CD8-positive, alpha-beta T cell (primary cell): ENCODE measurements at regions of chr22 and their contacts with region 1.

Region 1: GRCh38 chr22:39003165-39003638 is 10.9 kb upstream of the APOBEC3C start:
- DNase-seq: peak; percentile 43 to 92 (median 76)
- ATAC-seq: peak; percentile 83
- H3K4me3 ChIP-seq: no peak overlapping the region
- H3K4me3 Mint-ChIP-seq: no peak overlapping the region
- H3K27ac ChIP-seq: no peak overlapping the region
- H3K27ac Mint-ChIP-seq: peak overlapping the region; percentile 27
- H3K4me1 ChIP-seq: peaks cover 10% of the 10 kb centered on the region
- H3K4me1 Mint-ChIP-seq: peaks cover 12% of the 10 kb centered on the region
- H3K27me3 ChIP-seq: no peaks in the 10 kb centered on the region
- H3K27me3 Mint-ChIP-seq: peaks cover under 1% of the 10 kb centered on the region
- CTCF ChIP-seq: peak; percentile 68

Region 2: GRCh38 chr22:38766076-38766777 is 237.0 kb before region 1 on chr22:
- CTCF ChIA-PET with region 1: interaction called, 28 read pairs
- POLR2A ChIA-PET with region 1: no interaction called
- intact Hi-C with region 1: loop called in 1 of 2 experiments (anchors 5 kb)
- DNase-seq: peak in 7 of 9 experiments; percentile 34 to 74 (median 55)
- ATAC-seq: peak; percentile 63
- H3K4me3 ChIP-seq: no peak overlapping the region
- H3K4me3 Mint-ChIP-seq: no peak overlapping the region
- H3K27ac ChIP-seq: no peak overlapping the region
- H3K27ac Mint-ChIP-seq: no peak overlapping the region
- H3K4me1 ChIP-seq: peaks cover 6% of the 10 kb centered on the region
- H3K4me1 Mint-ChIP-seq: peaks cover 11% of the 10 kb centered on the region
- H3K27me3 ChIP-seq: no peaks in the 10 kb centered on the region
- H3K27me3 Mint-ChIP-seq: no peaks in the 10 kb centered on the region
- CTCF ChIP-seq: peak; percentile 54

Region 3: GRCh38 chr22:38981992-38982927 is 20.9 kb before region 1 on chr22 and contains the start of gene APOBEC3B:
- CTCF ChIA-PET with region 1: interaction called, 6 read pairs
- POLR2A ChIA-PET with region 1: no interaction called
- intact Hi-C with region 1: loop called in 1 of 2 experiments (anchors 1 kb)
- DNase-seq: peak; percentile 10 to 84 (median 69)
- ATAC-seq: peak; percentile 63
- H3K4me3 ChIP-seq: peak within 1 kb of the TSS; percentile 41 to 48
- H3K4me3 Mint-ChIP-seq: peak within 1 kb of the TSS; percentile 84
- H3K27ac ChIP-seq: peak within 1 kb of the TSS in 1 of 2 experiments; percentile 19
- H3K27ac Mint-ChIP-seq: no peak within 1 kb of the TSS
- H3K4me1 ChIP-seq: peaks cover 18% of the 10 kb centered on the region
- H3K4me1 Mint-ChIP-seq: peaks cover 28% of the 10 kb centered on the region
- H3K27me3 ChIP-seq: peaks cover 0 to 7% of the 10 kb centered on the region in 2 experiments
- H3K27me3 Mint-ChIP-seq: no peaks in the 10 kb centered on the region
- CTCF ChIP-seq: no peak
- total RNA-seq, gene APOBEC3B: 0.41 TPM in 1 of 2 experiments, not detected in the other

Region 4: GRCh38 chr22:39030705-39031104 is 27.5 kb after region 1 on chr22:
- CTCF ChIA-PET with region 1: no interaction called
- POLR2A ChIA-PET with region 1: no interaction called
- intact Hi-C with region 1: no loop called
- DNase-seq: no peak
- ATAC-seq: no peak
- H3K4me3 ChIP-seq: no peak overlapping the region
- H3K4me3 Mint-ChIP-seq: no peak overlapping the region
- H3K27ac ChIP-seq: no peak overlapping the region
- H3K27ac Mint-ChIP-seq: no peak overlapping the region
- H3K4me1 ChIP-seq: peaks cover under 1% of the 10 kb centered on the region
- H3K4me1 Mint-ChIP-seq: peaks cover 4% of the 10 kb centered on the region
- H3K27me3 ChIP-seq: no peaks in the 10 kb centered on the region
- H3K27me3 Mint-ChIP-seq: no peaks in the 10 kb centered on the region
- CTCF ChIP-seq: no peak

Region 5: GRCh38 chr22:39117585-39118191 is 114.5 kb after region 1 on chr22:
- CTCF ChIA-PET with region 1: interaction called, 63 read pairs
- POLR2A ChIA-PET with region 1: no interaction called
- intact Hi-C with region 1: loop called (anchors 1 kb)
- DNase-seq: peak; percentile 49 to 93 (median 74)
- ATAC-seq: peak; percentile 51
- H3K4me3 ChIP-seq: peak overlapping the region in 1 of 2 experiments; percentile 15
- H3K4me3 Mint-ChIP-seq: peak overlapping the region; percentile 45
- H3K27ac ChIP-seq: peak overlapping the region; percentile 54 to 93
- H3K27ac Mint-ChIP-seq: peak overlapping the region; percentile 84
- H3K4me1 ChIP-seq: peaks cover 14% of the 10 kb centered on the region
- H3K4me1 Mint-ChIP-seq: peaks cover 38% of the 10 kb centered on the region
- H3K27me3 ChIP-seq: no peaks in the 10 kb centered on the region
- H3K27me3 Mint-ChIP-seq: no peaks in the 10 kb centered on the region
- CTCF ChIP-seq: peak; percentile 54

Region 6: DNA sequence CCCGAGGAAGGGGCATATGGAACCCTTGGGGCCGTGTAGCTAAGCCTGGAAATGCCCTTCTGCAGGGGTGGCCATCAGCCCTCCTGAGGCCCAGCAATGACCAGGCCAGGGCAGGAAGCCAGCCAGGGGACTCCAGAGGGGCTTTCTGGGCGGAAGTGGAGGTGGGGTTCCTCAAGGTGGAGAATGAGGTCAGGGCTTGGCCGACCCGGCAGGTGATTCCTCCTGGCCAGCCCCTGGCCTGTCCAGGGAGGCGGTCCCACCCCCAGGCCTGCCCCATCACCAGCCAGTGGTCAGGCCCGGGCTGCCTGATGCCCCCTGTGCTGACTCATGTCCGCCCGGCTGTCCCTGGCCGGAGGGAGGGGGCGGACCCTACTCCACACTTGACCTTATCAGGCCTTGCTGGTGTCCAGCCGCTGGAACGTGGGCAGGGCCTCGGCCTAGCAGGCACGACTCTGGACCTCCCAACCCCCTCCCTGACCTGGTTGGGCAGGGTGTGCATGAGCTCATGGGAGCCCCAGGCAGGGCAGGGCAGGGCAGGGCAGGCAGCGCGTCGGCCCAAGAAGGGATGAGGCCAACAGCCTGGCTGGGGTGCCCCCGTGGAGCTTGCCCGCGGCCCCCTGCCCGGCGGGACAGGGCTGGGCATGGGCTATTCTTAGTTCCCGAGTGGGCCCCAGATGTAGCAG is 280.3 kb after region 1 on chr22:
- CTCF ChIA-PET with region 1: no interaction called
- POLR2A ChIA-PET with region 1: no interaction called
- intact Hi-C with region 1: no loop called
- DNase-seq: no peak
- ATAC-seq: no peak
- H3K4me3 ChIP-seq: no peak overlapping the region
- H3K4me3 Mint-ChIP-seq: no peak overlapping the region
- H3K27ac ChIP-seq: no peak overlapping the region
- H3K27ac Mint-ChIP-seq: no peak overlapping the region
- H3K4me1 ChIP-seq: no peaks in the 10 kb centered on the region
- H3K4me1 Mint-ChIP-seq: peaks cover 6% of the 10 kb centered on the region
- H3K27me3 ChIP-seq: no peaks in the 10 kb centered on the region
- H3K27me3 Mint-ChIP-seq: peaks cover 5% of the 10 kb centered on the region
- CTCF ChIP-seq: no peak

Region 7: DNA sequence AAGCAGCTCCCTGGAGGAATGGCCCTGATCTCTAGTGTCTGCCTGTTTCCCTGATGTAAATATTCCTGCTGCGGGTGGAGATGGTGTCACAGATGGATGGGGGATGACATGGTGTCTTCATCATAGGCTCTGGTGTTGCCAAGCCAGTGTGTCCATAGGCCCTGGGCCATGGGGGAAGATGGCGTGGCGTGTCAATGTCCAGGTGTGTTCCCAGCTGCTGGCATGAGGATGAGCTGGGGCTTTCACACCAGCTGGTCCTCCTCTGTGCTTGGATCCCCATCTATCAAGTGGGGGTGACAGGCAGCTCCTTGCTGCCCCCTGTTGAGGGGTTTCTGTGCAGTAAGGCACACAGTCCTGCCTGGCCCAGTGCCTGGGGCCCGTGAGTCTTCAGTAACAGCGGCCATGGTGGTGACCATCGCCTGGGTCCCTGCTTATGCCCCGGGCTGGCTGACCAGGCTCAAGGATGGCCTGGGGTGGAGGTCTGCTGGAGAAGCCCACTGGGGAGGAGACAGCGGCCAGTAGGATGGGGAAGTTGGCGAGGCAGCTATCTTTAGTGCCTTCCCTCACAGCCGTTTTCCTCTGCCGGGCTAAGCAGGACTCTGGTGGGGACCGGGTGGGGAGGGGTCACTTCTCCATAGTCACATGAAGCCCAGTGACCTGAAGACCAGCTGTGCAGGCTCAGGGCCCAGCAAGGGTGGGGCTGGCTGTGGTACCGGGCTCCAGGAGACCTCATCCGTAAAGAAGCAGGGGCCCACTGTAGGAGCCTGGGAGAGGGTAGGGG is 303.6 kb after region 1 on chr22:
- CTCF ChIA-PET with region 1: interaction called, 4 read pairs
- POLR2A ChIA-PET with region 1: no interaction called
- intact Hi-C with region 1: loop called in 1 of 2 experiments (anchors 1 kb)
- DNase-seq: peak in 8 of 9 experiments; percentile 28 to 75 (median 60)
- ATAC-seq: peak; percentile 41
- H3K4me3 ChIP-seq: no peak overlapping the region
- H3K4me3 Mint-ChIP-seq: no peak overlapping the region
- H3K27ac ChIP-seq: no peak overlapping the region
- H3K27ac Mint-ChIP-seq: no peak overlapping the region
- H3K4me1 ChIP-seq: no peaks in the 10 kb centered on the region
- H3K4me1 Mint-ChIP-seq: peaks cover 9% of the 10 kb centered on the region
- H3K27me3 ChIP-seq: no peaks in the 10 kb centered on the region
- H3K27me3 Mint-ChIP-seq: no peaks in the 10 kb centered on the region
- CTCF ChIP-seq: no peak